HepG2 (cell line): ENCODE measurements at regions of chr7 and their contacts with region 1.

Region 1: GRCh38 chr7:117479225-117480054 is at the start of gene CFTR:
- DNase-seq: no peak
- ATAC-seq: no peak
- H3K4me3 ChIP-seq: no peak within 1 kb of the TSS
- H3K27ac ChIP-seq: no peak within 1 kb of the TSS
- H3K4me1 ChIP-seq: no peaks in the 10 kb centered on the region
- H3K27me3 ChIP-seq: peaks cover 0 to 8% of the 10 kb centered on the region in 2 experiments; a peak in 1 of 5 replicates
- CTCF ChIP-seq: no peak
- EP300 ChIP-seq: no peak
- POLR2A ChIP-seq: no peak
- RAD21 ChIP-seq: no peak
- total RNA-seq, gene CFTR: not detected in 2 replicates

Region 2: GRCh38 chr7:117285826-117286225 is 193.6 kb before region 1 on chr7:
- CTCF ChIA-PET with region 1: no interaction called
- POLR2A ChIA-PET with region 1: no interaction called
- in situ Hi-C with region 1: no loop called
- intact Hi-C with region 1: no loop called
- DNase-seq: no peak
- ATAC-seq: no peak
- H3K4me3 ChIP-seq: no peak overlapping the region
- H3K27ac ChIP-seq: no peak overlapping the region
- H3K4me1 ChIP-seq: no peaks in the 10 kb centered on the region
- H3K27me3 ChIP-seq: peaks cover 0 to 13% of the 10 kb centered on the region in 2 experiments; a peak in 2 of 5 replicates
- CTCF ChIP-seq: no peak
- EP300 ChIP-seq: no peak
- POLR2A ChIP-seq: no peak
- RAD21 ChIP-seq: no peak

Region 3: DNA sequence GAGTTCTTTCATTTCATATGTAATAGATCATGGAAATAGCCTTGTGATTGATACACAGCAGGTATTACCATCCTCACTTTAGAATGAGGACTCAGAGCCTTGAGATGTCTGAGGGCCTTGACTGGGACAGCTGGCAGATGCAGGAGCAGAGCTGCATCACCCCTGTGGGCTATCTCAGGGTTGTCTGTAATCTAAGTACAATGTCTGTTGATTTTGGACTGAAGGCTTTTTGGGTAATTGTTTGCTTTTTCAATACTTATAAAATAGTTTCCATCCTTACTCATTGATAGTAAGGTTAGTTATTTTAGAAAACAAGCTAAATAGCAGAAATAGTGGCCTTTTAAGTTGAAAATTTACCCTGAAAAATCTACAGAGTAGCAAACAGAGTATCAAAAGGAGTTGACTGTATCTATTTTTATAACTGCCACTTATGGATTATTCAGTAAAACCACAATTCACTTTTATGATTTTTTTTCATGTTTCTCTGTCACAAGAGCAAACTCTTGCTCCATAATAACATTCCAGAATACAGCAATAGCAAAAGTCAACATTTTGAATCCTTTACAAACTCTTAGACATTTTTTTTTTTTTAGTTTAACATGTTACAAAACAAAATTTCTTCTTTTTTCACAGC is 180.1 kb after region 1 on chr7:
- CTCF ChIA-PET with region 1: no interaction called
- POLR2A ChIA-PET with region 1: no interaction called
- in situ Hi-C with region 1: no loop called
- intact Hi-C with region 1: loop called (anchors 10 kb)
- DNase-seq: no peak
- ATAC-seq: no peak
- H3K4me3 ChIP-seq: no peak overlapping the region
- H3K27ac ChIP-seq: no peak overlapping the region
- H3K4me1 ChIP-seq: no peaks in the 10 kb centered on the region
- H3K27me3 ChIP-seq: no peaks in the 10 kb centered on the region
- CTCF ChIP-seq: no peak
- EP300 ChIP-seq: no peak
- POLR2A ChIP-seq: no peak
- RAD21 ChIP-seq: no peak

Region 4: DNA sequence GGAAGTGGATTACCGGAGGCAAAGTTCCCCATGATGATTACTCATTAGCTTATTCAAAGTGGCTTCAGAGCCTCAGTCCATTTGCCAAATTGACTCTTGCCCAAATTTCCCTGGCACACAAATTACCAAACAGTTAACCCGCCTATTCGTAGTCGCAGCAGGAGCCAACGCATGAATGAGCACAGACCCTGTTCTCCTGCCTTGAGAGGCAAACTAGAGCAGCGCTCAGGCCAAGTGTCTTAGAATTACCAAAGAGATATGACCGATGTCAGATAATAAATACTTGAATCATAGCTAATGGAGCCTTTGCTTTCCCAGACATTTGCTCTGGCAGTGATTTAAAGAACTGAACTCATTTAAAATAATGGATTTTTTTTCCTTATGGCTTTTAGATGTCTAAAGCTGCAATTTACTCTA is 328.9 kb after region 1 on chr7:
- CTCF ChIA-PET with region 1: no interaction called
- POLR2A ChIA-PET with region 1: no interaction called
- in situ Hi-C with region 1: no loop called
- intact Hi-C with region 1: no loop called
- DNase-seq: no peak
- ATAC-seq: no peak
- H3K4me3 ChIP-seq: no peak overlapping the region
- H3K27ac ChIP-seq: no peak overlapping the region
- H3K4me1 ChIP-seq: no peaks in the 10 kb centered on the region
- H3K27me3 ChIP-seq: no peaks in the 10 kb centered on the region
- CTCF ChIP-seq: no peak
- EP300 ChIP-seq: no peak
- POLR2A ChIP-seq: no peak
- RAD21 ChIP-seq: no peak